ENCODE measurements at regions of chr5 and their contacts with region 1.

Region 1: DNA sequence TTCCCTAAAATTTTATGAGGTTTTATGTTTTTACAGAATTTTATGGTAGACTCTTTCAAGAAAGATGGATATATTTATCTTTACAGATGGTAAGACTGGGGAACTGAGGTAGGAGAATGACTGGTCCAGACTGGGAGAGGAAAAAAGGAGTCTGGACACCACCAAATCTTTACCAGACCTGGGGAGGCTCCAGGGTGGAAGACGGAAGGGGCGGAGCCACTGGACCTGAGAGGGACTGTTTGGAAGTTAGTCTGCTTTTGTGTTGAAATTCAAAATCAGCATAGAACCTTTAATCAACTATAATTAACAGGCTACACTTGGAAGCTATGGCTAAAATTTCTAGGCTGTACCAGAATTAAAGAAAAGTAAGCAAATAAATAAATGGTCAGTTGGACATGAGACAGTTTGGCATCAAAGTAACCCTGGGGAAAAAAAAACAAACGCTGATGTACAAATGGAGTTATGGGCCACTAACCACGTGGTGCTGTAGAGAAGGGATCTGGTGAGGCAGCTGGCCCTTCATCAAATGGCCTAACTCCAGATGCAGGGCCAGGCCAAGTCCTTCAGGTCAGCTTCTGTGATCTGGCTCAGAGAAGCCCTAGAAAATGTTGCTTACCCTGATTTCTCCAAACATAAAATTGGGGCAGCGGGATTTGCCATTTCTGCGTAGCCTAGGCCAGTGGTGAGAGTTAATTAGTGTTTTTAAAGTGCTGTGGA is 155.1 kb downstream of the ARSB start:
- DNase-seq: no peak
- ATAC-seq: no peak
- H3K4me3 ChIP-seq: no peak overlapping the region
- H3K27ac ChIP-seq: no peak overlapping the region
- H3K4me1 ChIP-seq: peaks cover 6% of the 10 kb centered on the region; the same call in 1 of the 2 replicates
- H3K27me3 ChIP-seq: no peaks in the 10 kb centered on the region
- CTCF ChIP-seq: no peak
- EP300 ChIP-seq: no peak
- POLR2A ChIP-seq: no peak
- RAD21 ChIP-seq: no peak

Region 2: DNA sequence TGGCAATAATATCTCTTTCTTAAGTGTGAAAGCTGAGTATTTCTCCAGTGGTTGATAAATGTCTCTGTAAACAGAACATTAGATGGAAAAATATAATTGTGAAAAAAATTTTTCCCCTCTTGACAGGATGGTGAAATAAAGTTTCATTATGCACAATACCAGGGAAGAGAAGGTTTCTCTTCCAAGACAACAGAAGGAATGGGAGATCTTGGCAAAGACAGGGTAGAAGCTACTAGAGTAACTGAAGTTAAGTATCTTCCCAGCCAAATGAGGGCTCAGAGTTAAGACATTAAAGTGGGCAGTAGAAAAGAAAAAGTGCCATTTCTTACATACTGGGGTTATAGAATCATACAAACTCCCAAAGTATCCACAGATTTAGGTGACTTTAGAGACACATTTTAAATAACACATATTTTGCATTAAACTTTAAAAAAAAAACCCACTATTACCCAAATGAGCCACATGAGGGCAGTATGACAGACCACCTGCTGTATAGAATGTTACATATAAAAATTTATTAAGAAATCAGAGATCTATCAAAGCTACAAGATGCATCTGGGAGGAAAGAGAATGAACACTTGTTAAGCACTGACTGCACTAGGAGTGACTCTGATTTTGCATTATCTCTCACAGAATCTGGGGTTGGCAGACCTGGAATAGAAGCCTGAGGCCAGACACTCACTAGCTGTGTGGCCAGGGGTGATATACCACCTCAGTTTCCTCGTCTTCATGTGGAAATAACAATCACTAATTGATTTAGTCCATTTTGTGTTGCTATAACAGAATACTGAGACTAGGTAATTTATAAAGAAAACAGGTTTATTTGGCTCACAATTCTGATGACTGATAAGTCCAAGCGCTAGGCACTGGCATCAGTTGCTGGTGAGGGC is 56.6 kb after region 1 on chr5:
- CTCF ChIA-PET with region 1: interaction called, 6 read pairs
- POLR2A ChIA-PET with region 1: no interaction called
- RAD21 ChIA-PET with region 1: no interaction called
- SMC1A ChIA-PET with region 1: interaction called, 5 read pairs
- in situ Hi-C with region 1: no loop called
- intact Hi-C with region 1: loop called (anchors 10 kb)
- DNase-seq: no peak
- ATAC-seq: peak; percentile 25
- H3K4me3 ChIP-seq: no peak overlapping the region
- H3K27ac ChIP-seq: no peak overlapping the region
- H3K4me1 ChIP-seq: peaks cover 21% of the 10 kb centered on the region
- H3K27me3 ChIP-seq: no peaks in the 10 kb centered on the region; a peak in 1 of 4 replicates
- CTCF ChIP-seq: peak; percentile 37 to 52 (median 38); a peak in 5 of 6 replicates
- EP300 ChIP-seq: no peak
- POLR2A ChIP-seq: no peak
- RAD21 ChIP-seq: peak; percentile 51